CD8-positive, alpha-beta T cell (primary cell): ENCODE measurements at regions of chr12 and their contacts with region 1.

Region 1: DNA sequence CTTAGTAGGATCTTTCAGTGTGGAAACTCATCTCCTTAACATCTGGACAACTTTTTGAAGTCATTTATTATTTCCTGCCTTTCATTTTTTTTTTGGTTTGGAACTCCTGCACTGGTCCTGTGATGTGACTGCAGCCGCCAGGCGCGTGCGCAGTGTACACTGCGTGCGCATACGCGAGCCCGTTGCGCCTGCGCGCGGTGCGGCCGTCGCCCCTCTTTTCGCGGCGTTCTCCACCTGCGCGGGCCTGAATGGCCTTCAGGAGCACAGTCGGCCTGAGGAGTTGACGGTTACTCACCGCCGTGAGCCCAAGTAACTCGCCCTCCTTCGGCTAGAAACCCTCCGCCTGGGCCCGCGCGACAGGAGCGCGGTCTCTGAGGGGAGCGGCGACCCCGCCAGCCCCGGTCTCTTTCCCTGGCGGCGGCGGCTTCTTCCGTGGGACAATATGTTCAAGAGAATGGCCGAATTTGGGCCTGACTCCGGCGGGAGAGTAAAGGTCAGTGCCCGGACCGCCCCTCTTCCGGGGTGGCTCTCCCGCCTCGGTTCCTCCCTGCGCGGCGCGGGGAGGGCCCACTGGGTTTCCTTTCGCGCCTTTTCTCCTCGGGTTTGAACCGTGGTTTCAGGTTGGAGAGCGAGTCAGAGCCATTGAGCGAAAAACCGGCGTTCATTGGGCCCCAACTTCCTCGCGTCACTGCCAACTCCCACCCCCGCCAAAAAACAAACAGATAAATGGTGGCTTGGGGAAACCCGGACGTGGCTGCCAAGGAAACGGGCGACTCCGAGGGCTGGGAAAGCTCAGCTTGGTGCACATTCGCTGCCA is at the start of gene YEATS4:
- DNase-seq: peak; percentile 68 to 96 (median 83)
- ATAC-seq: peak; percentile 80
- H3K4me3 ChIP-seq: peak within 1 kb of the TSS; percentile 64 to 91
- H3K4me3 Mint-ChIP-seq: peak within 1 kb of the TSS; percentile 90
- H3K27ac ChIP-seq: peak within 1 kb of the TSS; percentile 72 to 95
- H3K27ac Mint-ChIP-seq: peak within 1 kb of the TSS; percentile 95
- H3K4me1 ChIP-seq: peaks cover 15% of the 10 kb centered on the region
- H3K4me1 Mint-ChIP-seq: peaks cover 29% of the 10 kb centered on the region
- H3K27me3 ChIP-seq: no peaks in the 10 kb centered on the region
- H3K27me3 Mint-ChIP-seq: peaks cover 6% of the 10 kb centered on the region
- CTCF ChIP-seq: no peak
- total RNA-seq, gene YEATS4: 24.5 to 27.5 TPM

Region 2: GRCh38 chr12:68856510-68856909 is 503.2 kb before region 1 on chr12:
- CTCF ChIA-PET with region 1: no interaction called
- POLR2A ChIA-PET with region 1: no interaction called
- intact Hi-C with region 1: no loop called
- DNase-seq: no peak
- ATAC-seq: no peak
- H3K4me3 ChIP-seq: no peak overlapping the region
- H3K4me3 Mint-ChIP-seq: no peak overlapping the region
- H3K27ac ChIP-seq: no peak overlapping the region
- H3K27ac Mint-ChIP-seq: no peak overlapping the region
- H3K4me1 ChIP-seq: no peaks in the 10 kb centered on the region
- H3K4me1 Mint-ChIP-seq: no peaks in the 10 kb centered on the region
- H3K27me3 ChIP-seq: peaks cover 0 to 2% of the 10 kb centered on the region in 2 experiments
- H3K27me3 Mint-ChIP-seq: peaks cover 10% of the 10 kb centered on the region
- CTCF ChIP-seq: no peak

Region 3: DNA sequence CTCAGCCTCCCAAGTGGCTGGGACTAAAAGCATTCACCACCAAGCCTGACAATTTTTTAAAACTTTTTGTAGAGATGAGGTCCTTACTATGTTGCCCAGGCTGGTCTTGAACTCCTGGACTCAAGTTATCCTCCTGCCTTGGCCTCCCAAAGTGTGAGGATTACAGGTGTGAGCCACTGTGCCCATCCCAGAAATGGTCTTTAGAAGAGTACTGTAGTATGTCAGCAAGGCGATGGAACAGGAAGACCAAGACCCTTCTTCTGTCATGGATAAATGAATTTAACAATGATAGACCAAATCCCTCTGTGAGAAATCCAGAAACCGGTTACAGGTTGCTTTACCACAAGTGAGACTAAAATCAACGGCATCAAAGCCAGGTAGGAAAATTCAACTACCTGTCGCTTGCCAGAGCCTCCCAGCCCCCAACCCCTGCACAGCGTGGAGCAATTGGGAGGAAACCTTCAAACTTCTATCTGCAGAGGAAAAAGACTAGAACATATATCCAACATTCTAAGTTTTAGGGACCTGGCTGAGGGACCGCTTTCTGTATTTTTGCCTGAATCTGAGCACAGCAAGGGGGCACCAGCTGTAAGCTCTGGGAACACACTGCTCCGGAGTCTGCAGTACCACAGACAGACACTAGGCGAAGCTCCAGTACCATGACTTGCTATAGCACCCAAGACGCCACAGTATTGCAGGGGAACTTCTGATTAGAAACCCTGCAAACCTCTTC is 69.0 kb before region 1 on chr12:
- CTCF ChIA-PET with region 1: interaction called, 23 read pairs
- POLR2A ChIA-PET with region 1: interaction called, 3 read pairs
- intact Hi-C with region 1: loop called (anchors 1 to 2 kb)
- DNase-seq: peak; percentile 64 to 89 (median 83)
- ATAC-seq: peak; percentile 100
- H3K4me3 ChIP-seq: no peak overlapping the region
- H3K4me3 Mint-ChIP-seq: no peak overlapping the region
- H3K27ac ChIP-seq: no peak overlapping the region
- H3K27ac Mint-ChIP-seq: no peak overlapping the region
- H3K4me1 ChIP-seq: no peaks in the 10 kb centered on the region
- H3K4me1 Mint-ChIP-seq: peaks cover 10% of the 10 kb centered on the region
- H3K27me3 ChIP-seq: peaks cover 0 to 9% of the 10 kb centered on the region in 2 experiments
- H3K27me3 Mint-ChIP-seq: peaks cover 24% of the 10 kb centered on the region
- CTCF ChIP-seq: peak; percentile 92

Region 4: DNA sequence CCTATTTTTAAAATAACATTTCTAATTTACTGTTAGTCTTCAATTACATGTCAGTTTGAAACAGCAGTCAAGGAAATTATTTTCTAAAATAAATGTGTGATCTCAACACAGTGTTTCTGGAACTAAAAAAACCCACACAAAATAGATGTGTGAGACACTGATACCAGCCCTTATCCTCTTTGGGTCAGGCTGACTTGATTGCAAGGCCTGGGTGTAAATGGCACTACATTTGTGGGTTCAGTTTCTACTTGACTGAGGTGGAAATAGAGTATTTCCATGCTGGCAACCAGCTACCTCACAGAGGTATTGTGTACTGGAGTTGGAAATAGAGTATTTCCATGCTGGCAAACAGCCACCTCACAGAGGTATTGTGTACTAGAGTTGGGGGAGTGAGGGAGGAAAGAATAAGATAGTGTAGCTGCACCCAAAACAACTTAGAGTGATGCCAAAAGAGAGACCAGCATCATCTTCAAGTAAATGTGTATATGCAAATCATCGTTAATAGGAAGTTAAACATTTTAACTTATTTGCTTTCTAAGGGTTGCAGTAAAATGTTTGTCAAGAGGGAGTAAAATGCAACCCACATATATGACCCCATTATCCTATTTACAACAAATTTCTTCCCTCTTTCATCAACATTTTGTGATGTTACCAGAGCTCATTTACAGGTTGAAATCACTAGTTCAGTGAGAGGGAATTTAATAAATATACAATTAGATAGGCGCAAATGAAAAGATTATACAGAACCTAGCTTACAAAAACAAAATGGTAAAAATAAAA is 22.2 kb before region 1 on chr12:
- CTCF ChIA-PET with region 1: interaction called, 59 read pairs
- POLR2A ChIA-PET with region 1: interaction called, 3 read pairs
- intact Hi-C with region 1: loop called in 1 of 2 experiments (anchors 1 kb)
- DNase-seq: no peak
- ATAC-seq: no peak
- H3K4me3 ChIP-seq: no peak overlapping the region
- H3K4me3 Mint-ChIP-seq: no peak overlapping the region
- H3K27ac ChIP-seq: no peak overlapping the region
- H3K27ac Mint-ChIP-seq: no peak overlapping the region
- H3K4me1 ChIP-seq: peaks cover 25% of the 10 kb centered on the region
- H3K4me1 Mint-ChIP-seq: peaks cover 23% of the 10 kb centered on the region
- H3K27me3 ChIP-seq: no peaks in the 10 kb centered on the region
- H3K27me3 Mint-ChIP-seq: peaks cover 2% of the 10 kb centered on the region
- CTCF ChIP-seq: no peak

Region 5: DNA sequence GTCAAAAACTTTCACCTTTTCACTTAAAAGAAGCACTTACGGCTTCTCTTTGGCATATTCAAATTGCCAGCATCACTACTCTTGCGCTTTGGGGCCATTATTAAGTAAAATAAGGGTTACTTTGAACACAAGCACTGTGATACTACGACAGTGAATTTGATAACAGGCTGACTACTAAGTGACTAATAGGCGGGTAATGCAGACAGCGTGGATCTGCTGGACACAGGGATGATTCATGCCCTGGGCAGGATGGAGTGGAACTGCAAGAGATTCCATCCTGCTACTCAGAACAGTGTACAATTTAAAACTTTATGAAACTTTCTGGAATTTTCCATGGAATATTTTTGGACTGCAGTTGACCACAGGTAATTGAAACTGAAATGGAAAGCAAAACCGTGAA is 45.7 kb after region 1 on chr12:
- CTCF ChIA-PET with region 1: no interaction called
- POLR2A ChIA-PET with region 1: no interaction called
- intact Hi-C with region 1: no loop called
- DNase-seq: no peak
- ATAC-seq: no peak
- H3K4me3 ChIP-seq: no peak overlapping the region
- H3K4me3 Mint-ChIP-seq: no peak overlapping the region
- H3K27ac ChIP-seq: no peak overlapping the region
- H3K27ac Mint-ChIP-seq: no peak overlapping the region
- H3K4me1 ChIP-seq: no peaks in the 10 kb centered on the region
- H3K4me1 Mint-ChIP-seq: no peaks in the 10 kb centered on the region
- H3K27me3 ChIP-seq: no peaks in the 10 kb centered on the region
- H3K27me3 Mint-ChIP-seq: no peaks in the 10 kb centered on the region
- CTCF ChIP-seq: no peak

Region 6: GRCh38 chr12:69570545-69571399 is 211.0 kb after region 1 on chr12:
- CTCF ChIA-PET with region 1: interaction called, 71 read pairs
- POLR2A ChIA-PET with region 1: interaction called, 3 read pairs
- intact Hi-C with region 1: loop called (anchors 1 kb)
- DNase-seq: peak in 8 of 9 experiments; percentile 5 to 86 (median 56)
- ATAC-seq: peak; percentile 83
- H3K4me3 ChIP-seq: no peak overlapping the region
- H3K4me3 Mint-ChIP-seq: no peak overlapping the region
- H3K27ac ChIP-seq: no peak overlapping the region
- H3K27ac Mint-ChIP-seq: no peak overlapping the region
- H3K4me1 ChIP-seq: no peaks in the 10 kb centered on the region
- H3K4me1 Mint-ChIP-seq: no peaks in the 10 kb centered on the region
- H3K27me3 ChIP-seq: no peaks in the 10 kb centered on the region
- H3K27me3 Mint-ChIP-seq: no peaks in the 10 kb centered on the region
- CTCF ChIP-seq: peak; percentile 94

Region 7: GRCh38 chr12:69639400-69640016 is 279.8 kb after region 1 on chr12:
- CTCF ChIA-PET with region 1: interaction called, 46 read pairs
- POLR2A ChIA-PET with region 1: no interaction called
- intact Hi-C with region 1: loop called in 1 of 2 experiments (anchors 1 kb)
- DNase-seq: peak; percentile 15 to 71 (median 53)
- ATAC-seq: peak; percentile 73
- H3K4me3 ChIP-seq: no peak overlapping the region
- H3K4me3 Mint-ChIP-seq: no peak overlapping the region
- H3K27ac ChIP-seq: no peak overlapping the region
- H3K27ac Mint-ChIP-seq: no peak overlapping the region
- H3K4me1 ChIP-seq: no peaks in the 10 kb centered on the region
- H3K4me1 Mint-ChIP-seq: no peaks in the 10 kb centered on the region
- H3K27me3 ChIP-seq: no peaks in the 10 kb centered on the region
- H3K27me3 Mint-ChIP-seq: no peaks in the 10 kb centered on the region
- CTCF ChIP-seq: peak; percentile 81

Region 8: DNA sequence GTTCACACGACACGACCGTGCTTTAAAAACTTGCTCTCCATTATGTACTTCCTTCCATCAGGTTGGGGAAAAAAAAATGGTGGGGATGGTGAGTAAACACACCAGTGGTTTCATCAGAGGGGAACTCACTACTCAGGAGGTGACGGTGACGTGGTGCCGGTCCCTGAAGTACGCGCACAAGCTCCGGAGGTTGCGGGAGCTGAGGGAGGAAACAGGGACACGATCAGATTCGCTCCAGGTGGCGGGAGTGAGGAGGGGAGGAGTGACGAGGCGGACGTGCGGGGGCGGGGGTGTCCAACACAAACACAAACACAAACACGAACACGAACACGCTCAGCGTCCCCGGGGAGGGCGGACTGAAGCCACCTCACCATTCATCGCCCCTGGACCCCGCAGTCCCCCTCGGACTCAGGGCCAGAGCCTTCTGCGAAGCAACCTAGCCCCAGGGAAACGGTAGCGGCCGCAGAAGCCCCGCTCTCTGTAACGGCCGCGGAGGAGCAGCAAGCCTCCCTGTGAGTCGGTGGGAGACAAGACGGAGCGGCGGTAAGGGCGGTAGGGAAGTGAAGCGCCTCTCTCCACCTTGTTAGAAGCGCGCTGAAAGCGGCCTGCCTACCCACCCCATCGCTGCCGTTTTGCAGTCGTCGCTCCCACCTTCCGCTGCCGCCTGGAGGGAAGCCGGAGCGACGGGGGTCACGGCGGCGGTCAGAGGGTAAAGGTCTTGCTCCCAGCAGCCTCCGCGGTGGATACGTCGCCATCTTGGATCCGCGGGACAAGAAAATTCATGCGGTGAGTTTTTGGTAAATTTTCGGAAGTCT is 883.2 kb after region 1 on chr12 and contains the start of gene CNOT2:
- CTCF ChIA-PET with region 1: no interaction called
- POLR2A ChIA-PET with region 1: no interaction called
- intact Hi-C with region 1: loop called in 1 of 2 experiments (anchors 10 kb)
- DNase-seq: peak; percentile 79 to 96 (median 91)
- ATAC-seq: peak; percentile 78
- H3K4me3 ChIP-seq: peak within 1 kb of the TSS; percentile 94 to 96
- H3K4me3 Mint-ChIP-seq: peak within 1 kb of the TSS; percentile 100
- H3K27ac ChIP-seq: peak within 1 kb of the TSS; percentile 97 to 99
- H3K27ac Mint-ChIP-seq: peak within 1 kb of the TSS; percentile 100
- H3K4me1 ChIP-seq: peaks cover 57% of the 10 kb centered on the region
- H3K4me1 Mint-ChIP-seq: peaks cover 60% of the 10 kb centered on the region
- H3K27me3 ChIP-seq: no peaks in the 10 kb centered on the region
- H3K27me3 Mint-ChIP-seq: no peaks in the 10 kb centered on the region
- CTCF ChIP-seq: no peak
- total RNA-seq, gene CNOT2: 154 to 158 TPM